B cell (primary cell): ENCODE measurements at regions of chr21 and their contacts with region 1.

Region 1: DNA sequence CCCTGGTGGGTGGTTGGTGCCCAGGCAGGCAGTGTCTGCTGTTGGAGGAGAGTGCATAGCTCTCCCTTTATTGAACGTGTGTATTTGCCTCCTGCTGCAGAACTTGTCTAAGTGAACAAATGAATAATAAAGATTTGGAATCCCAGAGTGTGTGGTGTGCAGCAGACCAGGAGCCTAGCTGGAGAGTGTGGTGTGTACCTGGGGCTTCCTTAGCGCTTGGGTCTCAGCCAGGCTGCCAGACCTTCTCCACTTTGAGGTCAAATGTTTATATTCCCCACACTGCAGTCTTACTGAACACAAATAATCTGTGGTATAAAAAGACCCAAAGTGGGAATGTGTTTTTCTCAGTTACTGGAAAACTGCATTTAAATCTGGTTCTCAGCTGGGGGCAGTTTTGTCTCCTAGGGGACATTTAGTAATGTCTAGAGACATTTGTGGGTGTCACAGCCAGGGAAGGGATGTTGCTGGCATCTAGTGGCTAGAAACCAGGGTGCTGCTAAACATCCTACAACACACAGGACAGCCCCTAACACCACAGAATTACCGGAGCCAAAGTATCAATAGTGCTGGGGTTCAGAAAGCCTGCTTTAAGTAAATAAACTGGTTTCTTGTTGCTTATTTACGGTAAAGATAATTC is 23.6 kb downstream of the SLC37A1 start:
- DNase-seq: peak; percentile 69
- ATAC-seq: no peak
- H3K4me3 ChIP-seq: no peak overlapping the region
- H3K4me3 Mint-ChIP-seq: peak overlapping the region; percentile 17
- H3K27ac ChIP-seq: peak overlapping the region in 1 of 2 donors; percentile 88
- H3K27ac Mint-ChIP-seq: peak overlapping the region; percentile 84
- H3K4me1 ChIP-seq: peaks cover 51% of the 10 kb centered on the region in 2 donors
- H3K4me1 Mint-ChIP-seq: peaks cover 58% of the 10 kb centered on the region
- H3K27me3 ChIP-seq: no peaks in the 10 kb centered on the region
- H3K27me3 Mint-ChIP-seq: no peaks in the 10 kb centered on the region
- CTCF ChIP-seq: peak; percentile 72

Region 2: DNA sequence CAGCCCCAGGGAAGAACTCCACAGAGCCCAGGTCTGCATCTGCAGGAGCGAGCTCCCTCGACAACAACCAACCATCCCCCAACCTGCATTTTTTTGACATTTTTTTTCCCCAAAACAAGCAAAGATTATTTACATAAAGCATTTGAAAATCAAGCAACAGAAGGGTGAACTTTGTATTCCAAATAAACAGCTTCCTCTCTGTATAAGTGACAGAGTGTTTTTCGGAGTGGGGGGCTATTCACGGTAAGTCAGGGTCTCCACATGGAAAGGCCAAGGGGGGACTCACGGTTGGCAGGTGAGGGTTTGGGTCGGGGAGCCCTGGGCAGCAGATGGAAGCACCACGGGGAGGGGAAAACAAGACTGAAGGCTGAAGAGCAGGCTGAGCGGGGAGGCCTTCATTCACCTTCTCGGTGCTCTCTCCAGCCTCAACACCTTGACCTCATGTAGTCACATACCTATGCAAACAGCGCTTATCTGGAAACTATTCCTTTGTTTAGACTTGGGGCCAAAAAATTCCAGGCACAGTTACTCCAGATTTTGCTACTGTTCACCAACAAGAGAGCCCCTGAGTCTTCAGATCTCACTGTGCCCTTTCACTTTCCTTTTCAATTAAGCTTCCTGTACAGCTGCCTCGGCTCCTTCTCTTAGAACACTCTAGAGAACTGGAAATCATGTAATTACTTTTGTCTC is 611.0 kb before region 1 on chr21:
- CTCF ChIA-PET with region 1: no interaction called
- POLR2A ChIA-PET with region 1: no interaction called
- intact Hi-C with region 1: loop called (anchors 10 kb)
- DNase-seq: peak; percentile 76
- ATAC-seq: peak; percentile 70
- H3K4me3 ChIP-seq: peak overlapping the region; percentile 55 to 70 (median 62)
- H3K4me3 Mint-ChIP-seq: peak overlapping the region; percentile 94
- H3K27ac ChIP-seq: peak overlapping the region; percentile 82 to 87
- H3K27ac Mint-ChIP-seq: peak overlapping the region; percentile 98
- H3K4me1 ChIP-seq: peaks cover 71 to 85% of the 10 kb centered on the region in 2 donors
- H3K4me1 Mint-ChIP-seq: peaks cover 81% of the 10 kb centered on the region
- H3K27me3 ChIP-seq: no peaks in the 10 kb centered on the region
- H3K27me3 Mint-ChIP-seq: no peaks in the 10 kb centered on the region
- CTCF ChIP-seq: no peak

Region 3: GRCh38 chr21:42164064-42164789 is 373.0 kb before region 1 on chr21:
- CTCF ChIA-PET with region 1: interaction called, 15 read pairs
- POLR2A ChIA-PET with region 1: no interaction called
- intact Hi-C with region 1: loop called (anchors 1 kb)
- DNase-seq: peak; percentile 73
- ATAC-seq: peak; percentile 82
- H3K4me3 ChIP-seq: no peak overlapping the region
- H3K4me3 Mint-ChIP-seq: no peak overlapping the region
- H3K27ac ChIP-seq: no peak overlapping the region
- H3K27ac Mint-ChIP-seq: peak overlapping the region; percentile 43
- H3K4me1 ChIP-seq: peaks cover 8 to 15% of the 10 kb centered on the region in 2 donors
- H3K4me1 Mint-ChIP-seq: peaks cover 14% of the 10 kb centered on the region
- H3K27me3 ChIP-seq: peaks cover 0 to 5% (median 2%) of the 10 kb centered on the region in 4 experiments
- H3K27me3 Mint-ChIP-seq: peaks cover 3% of the 10 kb centered on the region
- CTCF ChIP-seq: peak; percentile 73

Region 4: DNA sequence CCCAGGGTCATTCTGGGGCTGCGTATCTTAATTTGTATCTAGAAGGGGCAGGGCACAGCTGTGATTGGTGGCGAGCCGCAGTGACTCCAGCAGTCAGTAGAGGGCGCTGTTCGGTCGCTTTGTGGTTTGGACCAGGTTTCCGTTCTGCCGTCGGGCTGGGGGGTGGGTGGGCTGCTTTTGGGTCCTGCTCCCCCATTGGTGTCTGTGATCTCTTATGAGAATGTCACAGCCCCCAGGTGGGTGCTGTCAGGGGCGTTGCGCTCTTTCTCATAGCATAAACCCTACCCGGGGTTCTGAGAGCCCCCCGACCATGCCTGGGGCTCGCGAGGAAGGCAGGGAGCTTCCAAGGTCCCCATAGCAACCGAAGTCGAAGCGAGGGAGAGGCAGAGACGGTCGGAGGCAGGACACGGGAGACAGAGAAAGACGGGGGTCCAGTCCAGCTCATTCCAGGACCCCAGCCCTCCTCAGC is 227.4 kb before region 1 on chr21:
- CTCF ChIA-PET with region 1: interaction called, 39 read pairs
- POLR2A ChIA-PET with region 1: no interaction called
- intact Hi-C with region 1: loop called (anchors 1 kb)
- DNase-seq: peak; percentile 75
- ATAC-seq: peak; percentile 76
- H3K4me3 ChIP-seq: no peak overlapping the region
- H3K4me3 Mint-ChIP-seq: no peak overlapping the region
- H3K27ac ChIP-seq: no peak overlapping the region
- H3K27ac Mint-ChIP-seq: no peak overlapping the region
- H3K4me1 ChIP-seq: peaks cover 7 to 14% of the 10 kb centered on the region in 2 donors
- H3K4me1 Mint-ChIP-seq: peaks cover 4% of the 10 kb centered on the region
- H3K27me3 ChIP-seq: peaks cover 0 to 42% (median 13%) of the 10 kb centered on the region in 4 experiments
- H3K27me3 Mint-ChIP-seq: peaks cover 26% of the 10 kb centered on the region
- CTCF ChIP-seq: peak; percentile 89

Region 5: DNA sequence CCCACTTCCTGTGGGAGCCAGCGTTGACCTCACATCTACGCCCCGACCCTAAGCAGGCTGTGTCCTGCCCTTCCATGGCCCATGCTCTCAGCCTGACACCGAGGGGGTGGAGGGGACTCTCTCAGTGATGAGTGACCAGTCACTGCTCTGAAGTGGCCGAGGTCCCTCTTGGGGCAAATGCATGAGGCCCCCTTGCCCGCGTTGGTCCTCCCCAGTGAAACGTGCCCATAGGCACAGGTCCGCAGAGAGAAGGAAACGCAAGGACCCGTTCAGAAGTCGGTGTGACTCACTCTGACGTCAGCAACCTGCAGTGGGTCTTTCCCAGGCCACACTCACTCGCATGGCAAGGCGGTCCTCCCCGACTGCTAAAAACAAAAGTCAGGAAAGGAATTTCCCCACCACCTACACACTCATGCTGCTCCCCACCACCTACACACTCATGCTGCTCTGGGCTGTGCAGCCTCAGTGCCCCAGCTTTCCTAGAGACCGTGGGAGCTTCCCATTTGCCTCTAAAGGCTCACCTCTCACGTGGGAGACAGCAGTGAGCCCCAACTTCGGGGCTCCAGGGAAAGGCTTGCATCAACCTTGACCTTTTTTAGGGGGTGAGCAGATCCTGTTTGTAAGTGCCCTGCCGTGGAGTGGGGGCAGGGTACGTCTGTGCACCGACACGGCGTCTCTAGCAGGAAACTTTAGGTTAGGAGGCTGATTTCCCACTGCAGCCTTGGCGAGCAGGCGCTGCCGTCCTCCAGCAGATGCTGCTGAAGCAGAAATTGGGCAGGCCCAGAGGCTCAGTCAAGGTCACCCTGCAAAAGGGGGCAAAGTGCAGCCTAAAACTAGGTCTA is 122.1 kb before region 1 on chr21:
- CTCF ChIA-PET with region 1: interaction called, 7 read pairs
- POLR2A ChIA-PET with region 1: no interaction called
- intact Hi-C with region 1: loop called (anchors 5 kb)
- DNase-seq: peak; percentile 87
- ATAC-seq: peak; percentile 86
- H3K4me3 ChIP-seq: peak overlapping the region in 2 of 5 experiments; percentile 25 to 27
- H3K4me3 Mint-ChIP-seq: peak overlapping the region; percentile 77
- H3K27ac ChIP-seq: no peak overlapping the region
- H3K27ac Mint-ChIP-seq: peak overlapping the region; percentile 91
- H3K4me1 ChIP-seq: peaks cover 6 to 16% of the 10 kb centered on the region in 2 donors
- H3K4me1 Mint-ChIP-seq: peaks cover 32% of the 10 kb centered on the region
- H3K27me3 ChIP-seq: peaks cover 0 to 3% (median 1%) of the 10 kb centered on the region in 4 experiments
- H3K27me3 Mint-ChIP-seq: peaks cover 11% of the 10 kb centered on the region
- CTCF ChIP-seq: no peak

Region 6: GRCh38 chr21:42467140-42467983 is 69.9 kb before region 1 on chr21:
- CTCF ChIA-PET with region 1: interaction called, 37 read pairs
- POLR2A ChIA-PET with region 1: interaction called, 3 read pairs
- intact Hi-C with region 1: no loop called
- DNase-seq: peak; percentile 50
- ATAC-seq: no peak
- H3K4me3 ChIP-seq: no peak overlapping the region
- H3K4me3 Mint-ChIP-seq: no peak overlapping the region
- H3K27ac ChIP-seq: no peak overlapping the region
- H3K27ac Mint-ChIP-seq: peak overlapping the region; percentile 23
- H3K4me1 ChIP-seq: peaks cover 47 to 67% of the 10 kb centered on the region in 2 donors
- H3K4me1 Mint-ChIP-seq: peaks cover 53% of the 10 kb centered on the region
- H3K27me3 ChIP-seq: peaks cover 0 to 12% (median 0%) of the 10 kb centered on the region in 4 experiments
- H3K27me3 Mint-ChIP-seq: peaks cover 9% of the 10 kb centered on the region
- CTCF ChIP-seq: no peak

Region 7: DNA sequence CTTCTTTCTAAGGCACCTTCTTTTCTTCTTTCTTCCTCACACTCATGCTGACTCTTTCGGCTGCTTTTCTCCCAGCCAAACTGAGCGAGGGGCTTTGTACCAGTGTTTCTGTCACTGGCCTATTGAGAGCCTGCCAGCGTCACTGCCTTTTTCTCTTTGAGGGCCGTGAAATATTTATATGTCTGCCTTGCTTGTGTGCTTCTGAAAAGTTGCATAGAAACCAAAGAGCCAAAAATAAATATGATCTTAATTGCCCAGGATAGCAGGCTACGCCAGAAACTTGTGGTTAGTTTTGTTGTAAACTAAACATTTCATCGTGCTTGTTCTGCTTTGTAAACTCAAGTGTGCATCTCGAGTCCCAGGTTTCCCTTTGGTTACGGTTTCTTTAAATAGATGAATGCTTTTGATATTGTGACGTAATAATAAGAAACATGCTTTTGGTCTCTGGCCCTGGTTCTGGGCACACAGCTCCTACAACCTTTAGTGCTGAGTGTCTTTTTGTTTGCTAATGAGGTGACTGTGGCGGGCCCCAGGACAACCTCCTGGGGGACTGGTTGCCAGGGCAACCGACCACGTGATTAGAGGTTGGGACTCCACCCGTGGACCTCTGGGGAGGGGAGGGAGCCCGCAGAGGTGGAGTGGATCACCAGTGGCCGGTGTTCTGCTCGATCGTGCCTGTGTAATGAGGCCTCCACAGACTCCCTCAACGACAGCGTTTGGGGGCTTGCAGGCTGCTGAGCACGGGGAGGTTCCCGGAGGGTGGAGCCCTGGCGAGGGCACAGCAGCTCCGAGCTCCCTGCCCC is 12.7 kb before region 1 on chr21:
- CTCF ChIA-PET with region 1: interaction called, 51 read pairs
- POLR2A ChIA-PET with region 1: interaction called, 20 read pairs
- intact Hi-C with region 1: loop called (anchors 1 kb)
- DNase-seq: peak; percentile 96
- ATAC-seq: peak; percentile 85
- H3K4me3 ChIP-seq: peak overlapping the region in 4 of 5 experiments; percentile 29 to 65 (median 41)
- H3K4me3 Mint-ChIP-seq: peak overlapping the region; percentile 88
- H3K27ac ChIP-seq: peak overlapping the region; percentile 97 to 99
- H3K27ac Mint-ChIP-seq: peak overlapping the region; percentile 99
- H3K4me1 ChIP-seq: peaks cover 54 to 59% of the 10 kb centered on the region in 2 donors
- H3K4me1 Mint-ChIP-seq: peaks cover 78% of the 10 kb centered on the region
- H3K27me3 ChIP-seq: no peaks in the 10 kb centered on the region
- H3K27me3 Mint-ChIP-seq: no peaks in the 10 kb centered on the region
- CTCF ChIP-seq: no peak